ENCODE measurements at regions of chr11 and their contacts with region 1.

Region 1: GRCh38 chr11:123478352-123478987 is 48.4 kb downstream of the GRAMD1B start:
- DNase-seq: no peak
- H3K4me3 ChIP-seq: no peak overlapping the region
- H3K27ac ChIP-seq: no peak overlapping the region
- H3K4me1 ChIP-seq: peaks cover 38% of the 10 kb centered on the region
- H3K27me3 ChIP-seq: no peaks in the 10 kb centered on the region
- CTCF ChIP-seq: peak; percentile 76

Region 2: GRCh38 chr11:123301696-123302400 is 176.6 kb before region 1 on chr11:
- intact Hi-C with region 1: loop called (anchors 5 kb)
- DNase-seq: peak; percentile 56
- H3K4me3 ChIP-seq: peak overlapping the region; percentile 66
- H3K27ac ChIP-seq: peak overlapping the region; percentile 59
- H3K4me1 ChIP-seq: peaks cover 46% of the 10 kb centered on the region
- H3K27me3 ChIP-seq: peaks cover 52% of the 10 kb centered on the region
- CTCF ChIP-seq: peak; percentile 94

Region 3: GRCh38 chr11:123407130-123407995 is 71.1 kb before region 1 on chr11:
- intact Hi-C with region 1: loop called (anchors 5 kb)
- DNase-seq: peak; percentile 43
- H3K4me3 ChIP-seq: peak overlapping the region; percentile 17
- H3K27ac ChIP-seq: peak overlapping the region; percentile 89
- H3K4me1 ChIP-seq: peaks cover 51% of the 10 kb centered on the region
- H3K27me3 ChIP-seq: no peaks in the 10 kb centered on the region
- CTCF ChIP-seq: peak; percentile 72

Region 4: DNA sequence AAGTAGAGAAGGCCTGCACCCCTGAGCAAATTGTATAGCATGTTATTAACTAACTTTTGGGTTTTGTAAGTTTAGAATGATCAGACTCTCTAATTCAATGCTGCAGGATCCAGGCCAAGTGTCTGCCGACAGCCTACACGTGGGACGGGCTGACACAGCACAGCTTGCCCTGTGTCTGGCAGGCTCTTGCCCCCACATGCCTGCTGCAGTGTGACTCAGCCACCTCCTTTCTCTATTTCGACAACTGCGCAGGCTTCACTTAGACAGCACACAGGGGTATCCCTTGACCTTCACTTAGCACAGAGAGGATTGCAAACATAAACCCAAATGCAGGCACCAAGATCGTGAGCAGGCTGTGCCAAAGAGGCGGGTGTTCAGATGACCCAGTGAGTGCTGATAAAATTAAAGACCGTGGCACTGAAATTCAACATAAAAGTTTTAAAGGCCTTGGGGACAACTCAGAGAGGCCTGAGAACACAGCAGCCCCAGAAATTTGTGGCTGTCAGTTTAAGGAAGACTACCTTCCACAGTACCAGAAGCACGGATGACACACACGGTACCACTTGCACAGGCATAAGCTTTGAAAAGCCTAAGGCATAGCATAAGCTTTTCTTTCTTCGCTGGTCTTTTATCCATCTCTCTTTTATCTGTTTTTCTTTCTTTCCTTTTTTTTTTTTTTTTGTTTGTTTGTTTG is 138.2 kb after region 1 on chr11:
- intact Hi-C with region 1: no loop called
- DNase-seq: peak; percentile 70
- H3K4me3 ChIP-seq: no peak overlapping the region
- H3K27ac ChIP-seq: peak overlapping the region; percentile 79
- H3K4me1 ChIP-seq: peaks cover 11% of the 10 kb centered on the region
- H3K27me3 ChIP-seq: no peaks in the 10 kb centered on the region
- CTCF ChIP-seq: no peak

Measured in left ventricle myocardium inferior (tissue), 1 donor.